Activated B cell treated with CpG ODN at 0.5 μM for 24 hours (primary cell): ENCODE measurements at regions of chr17 and their contacts with region 1.

Region 1: GRCh38 chr17:1462287-1463112 is 6.5 kb upstream of the CRK start:
- DNase-seq: no peak
- ATAC-seq: no peak
- H3K4me3 Mint-ChIP-seq: peak overlapping the region; percentile 66
- H3K27ac Mint-ChIP-seq: peak overlapping the region; percentile 73
- H3K4me1 Mint-ChIP-seq: peaks cover 37% of the 10 kb centered on the region
- H3K27me3 Mint-ChIP-seq: no peaks in the 10 kb centered on the region
- CTCF ChIP-seq: no peak

Region 2: DNA sequence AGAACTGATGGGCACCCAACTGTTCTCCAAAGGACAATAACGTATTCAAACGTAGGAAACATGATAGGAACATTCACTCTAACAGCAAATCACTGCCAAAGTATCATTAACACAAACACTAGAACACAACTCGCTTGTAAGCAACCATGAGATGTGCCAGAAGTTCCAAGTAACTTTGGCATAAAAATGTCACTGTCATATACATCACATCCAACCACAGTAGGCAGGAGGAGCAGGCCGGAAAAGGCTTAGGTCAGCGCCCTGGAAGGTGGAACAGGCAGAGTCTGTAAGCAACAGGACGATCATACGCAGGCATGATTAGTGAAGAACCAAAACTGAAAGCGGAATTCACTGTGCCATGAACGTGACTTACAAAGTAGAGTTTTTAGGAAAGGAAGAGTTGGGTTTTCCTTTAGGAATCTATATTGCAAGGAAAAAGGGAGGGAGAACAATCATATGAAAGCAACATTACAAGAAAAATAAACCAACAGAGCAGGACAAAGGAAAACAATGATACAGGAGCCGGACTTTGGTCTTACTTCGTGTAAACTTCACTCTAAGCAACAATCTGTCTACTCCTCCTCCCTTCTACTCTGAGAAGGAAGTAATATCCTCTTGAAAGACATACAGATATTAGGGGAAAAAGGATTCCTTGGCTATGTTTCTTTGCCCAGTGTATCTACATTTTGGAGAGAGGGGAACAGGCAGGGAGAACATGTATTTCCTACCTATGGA is 114.7 kb before region 1 on chr17:
- CTCF ChIA-PET with region 1: no interaction called
- POLR2A ChIA-PET with region 1: no interaction called
- intact Hi-C with region 1: no loop called
- DNase-seq: no peak
- ATAC-seq: no peak
- H3K4me3 Mint-ChIP-seq: no peak overlapping the region
- H3K27ac Mint-ChIP-seq: peak overlapping the region; percentile 43
- H3K4me1 Mint-ChIP-seq: peaks cover 14% of the 10 kb centered on the region
- H3K27me3 Mint-ChIP-seq: no peaks in the 10 kb centered on the region
- CTCF ChIP-seq: no peak

Region 3: DNA sequence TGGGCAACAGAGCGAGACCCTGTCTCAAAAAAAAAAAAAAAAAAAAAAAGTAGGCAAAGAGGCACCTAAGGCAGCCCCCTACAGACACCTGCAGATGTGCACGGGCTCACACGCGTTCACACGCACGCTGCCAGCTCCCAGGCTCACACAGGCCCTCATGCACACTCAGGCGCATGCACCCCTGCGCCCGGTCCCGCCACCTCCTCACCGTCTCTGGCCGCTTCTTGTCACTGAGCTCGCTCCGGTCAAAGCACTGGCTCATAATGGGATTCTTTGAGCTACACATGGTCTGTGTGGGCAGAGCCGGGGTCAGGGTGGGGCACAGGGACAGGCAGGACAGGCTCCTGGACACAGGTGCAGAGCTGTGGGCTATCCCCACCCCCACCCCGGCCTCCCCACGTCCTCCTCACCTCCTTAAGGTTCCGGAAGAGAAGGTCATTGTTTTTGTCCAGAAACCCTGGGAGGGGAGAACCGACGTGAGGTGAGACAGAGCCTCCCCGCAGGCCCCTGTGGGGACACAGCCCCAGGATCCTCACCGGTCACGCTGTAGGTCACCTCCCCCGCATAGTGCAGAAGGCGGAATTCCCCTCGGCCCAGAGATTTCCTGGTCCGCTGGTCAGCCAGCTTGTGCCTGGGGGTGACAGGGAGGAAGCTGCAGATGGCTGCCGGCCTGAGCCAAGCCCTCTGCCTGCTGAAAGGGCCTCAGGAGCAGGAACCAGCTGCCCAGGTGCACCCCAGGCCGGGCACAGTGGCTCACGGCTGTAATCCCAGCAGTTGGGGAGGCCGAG is 12.1 kb after region 1 on chr17:
- CTCF ChIA-PET with region 1: no interaction called
- POLR2A ChIA-PET with region 1: interaction called, 27 read pairs
- intact Hi-C with region 1: loop called (anchors 1 kb)
- DNase-seq: peak; percentile 58
- ATAC-seq: peak; percentile 64
- H3K4me3 Mint-ChIP-seq: peak overlapping the region; percentile 70
- H3K27ac Mint-ChIP-seq: peak overlapping the region; percentile 79
- H3K4me1 Mint-ChIP-seq: peaks cover 56% of the 10 kb centered on the region
- H3K27me3 Mint-ChIP-seq: no peaks in the 10 kb centered on the region
- CTCF ChIP-seq: no peak